CD4-positive, alpha-beta memory T cell (primary cell): ENCODE measurements at regions of chr17 and their contacts with region 1.

Region 1: GRCh38 chr17:19513897-19514488 is 19.7 kb upstream of the SLC47A1 start:
- DNase-seq: peak; percentile 59 to 68 (median 64)
- H3K4me3 ChIP-seq: no peak overlapping the region
- H3K4me3 Mint-ChIP-seq: no peak overlapping the region
- H3K27ac ChIP-seq: no peak overlapping the region
- H3K27ac Mint-ChIP-seq: peak overlapping the region in 4 of 7 donors; percentile 7 to 68 (median 31)
- H3K4me1 ChIP-seq: no peaks in the 10 kb centered on the region
- H3K4me1 Mint-ChIP-seq: peaks cover 1 to 8% (median 3%) of the 10 kb centered on the region in 4 donors
- H3K27me3 ChIP-seq: no peaks in the 10 kb centered on the region
- H3K27me3 Mint-ChIP-seq: no peaks in the 10 kb centered on the region

Region 2: DNA sequence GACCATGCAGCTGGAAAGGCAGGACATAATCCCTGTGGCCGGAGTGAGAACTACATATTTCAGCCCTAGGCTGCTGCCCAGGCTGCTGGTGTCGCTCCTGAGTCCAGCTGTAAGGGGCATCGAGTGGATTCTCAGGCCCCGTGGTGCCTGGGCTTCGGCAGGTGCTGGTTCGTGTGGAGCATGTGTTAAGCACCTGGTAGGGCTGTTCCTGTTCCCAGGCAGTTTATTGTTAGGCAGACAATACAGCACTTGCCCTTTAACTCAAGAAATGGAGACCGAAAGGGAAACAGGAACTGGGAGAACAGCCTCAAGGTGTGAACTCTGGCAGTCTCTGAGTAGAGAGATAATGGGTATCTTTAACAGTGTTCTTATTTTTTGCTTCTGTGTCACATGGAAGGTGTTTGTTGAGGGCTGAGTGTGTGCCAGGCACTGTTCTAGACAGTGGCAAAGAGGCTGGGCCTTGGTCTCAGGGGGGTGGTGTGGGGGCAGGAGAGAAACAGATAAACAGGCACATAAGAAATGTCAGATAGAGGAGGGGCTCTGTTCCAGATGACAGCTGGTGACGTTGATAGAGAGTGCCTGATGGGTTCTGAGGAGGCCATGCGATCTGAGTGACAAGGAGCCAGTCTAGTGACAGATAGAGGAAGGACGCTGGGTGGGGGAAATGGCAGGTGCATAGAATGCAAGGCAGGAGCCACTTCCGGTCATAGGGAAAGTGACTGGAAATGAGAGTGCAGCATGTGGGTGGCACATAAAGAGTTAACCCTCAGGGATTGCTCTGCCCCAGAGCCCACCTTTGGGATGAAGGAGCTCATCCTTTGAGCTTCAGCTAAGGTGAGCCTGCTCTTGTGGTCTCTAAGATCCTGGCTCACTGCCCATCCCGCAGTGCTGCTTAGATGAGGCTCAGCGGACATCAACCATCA is 243.0 kb before region 1 on chr17:
- CTCF ChIA-PET with region 1: no interaction called
- POLR2A ChIA-PET with region 1: no interaction called
- intact Hi-C with region 1: no loop called
- DNase-seq: no peak
- H3K4me3 ChIP-seq: no peak overlapping the region
- H3K4me3 Mint-ChIP-seq: no peak overlapping the region
- H3K27ac ChIP-seq: no peak overlapping the region
- H3K27ac Mint-ChIP-seq: no peak overlapping the region
- H3K4me1 ChIP-seq: no peaks in the 10 kb centered on the region
- H3K4me1 Mint-ChIP-seq: peaks cover 0 to 4% (median 0%) of the 10 kb centered on the region in 4 donors
- H3K27me3 ChIP-seq: no peaks in the 10 kb centered on the region
- H3K27me3 Mint-ChIP-seq: no peaks in the 10 kb centered on the region

Region 3: GRCh38 chr17:19569785-19570543 is 56.0 kb after region 1 on chr17:
- CTCF ChIA-PET with region 1: no interaction called
- POLR2A ChIA-PET with region 1: no interaction called
- intact Hi-C with region 1: no loop called
- DNase-seq: no peak
- H3K4me3 ChIP-seq: no peak overlapping the region
- H3K4me3 Mint-ChIP-seq: no peak overlapping the region
- H3K27ac ChIP-seq: no peak overlapping the region
- H3K27ac Mint-ChIP-seq: peak overlapping the region in 1 of 7 donors; percentile 5
- H3K4me1 ChIP-seq: no peaks in the 10 kb centered on the region
- H3K4me1 Mint-ChIP-seq: peaks cover 0 to 1% (median 0%) of the 10 kb centered on the region in 4 donors
- H3K27me3 ChIP-seq: no peaks in the 10 kb centered on the region
- H3K27me3 Mint-ChIP-seq: peaks cover 4 to 6% of the 10 kb centered on the region in 2 donors

Region 4: DNA sequence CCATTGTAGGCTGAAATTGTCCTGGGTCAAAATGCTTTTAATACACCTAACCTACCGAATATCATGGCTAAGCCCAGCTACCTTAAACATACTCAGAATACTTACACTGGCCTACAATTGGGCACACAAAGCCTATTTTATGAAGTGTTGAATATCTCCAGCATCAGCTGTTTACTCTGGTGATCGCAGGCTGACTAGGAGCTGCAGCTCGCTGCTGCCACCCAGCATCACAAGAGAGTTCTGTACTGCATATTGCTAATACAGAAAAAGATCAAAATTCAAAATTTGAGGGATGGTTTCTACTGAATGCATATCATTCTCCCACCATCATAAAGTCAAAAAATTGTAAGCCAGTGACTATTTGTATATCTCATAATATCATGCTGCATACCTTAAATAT is 298.4 kb after region 1 on chr17:
- CTCF ChIA-PET with region 1: interaction called, 4 read pairs
- POLR2A ChIA-PET with region 1: no interaction called
- intact Hi-C with region 1: loop called (anchors 1 kb)
- DNase-seq: peak in 4 of 5 donors; percentile 5 to 22 (median 11)
- H3K4me3 ChIP-seq: no peak overlapping the region
- H3K4me3 Mint-ChIP-seq: no peak overlapping the region
- H3K27ac ChIP-seq: no peak overlapping the region
- H3K27ac Mint-ChIP-seq: no peak overlapping the region
- H3K4me1 ChIP-seq: no peaks in the 10 kb centered on the region
- H3K4me1 Mint-ChIP-seq: peaks cover 0 to 1% (median 0%) of the 10 kb centered on the region in 4 donors
- H3K27me3 ChIP-seq: no peaks in the 10 kb centered on the region
- H3K27me3 Mint-ChIP-seq: no peaks in the 10 kb centered on the region